ENCODE measurements at regions of chr7 and their contacts with region 1.

Region 1: DNA sequence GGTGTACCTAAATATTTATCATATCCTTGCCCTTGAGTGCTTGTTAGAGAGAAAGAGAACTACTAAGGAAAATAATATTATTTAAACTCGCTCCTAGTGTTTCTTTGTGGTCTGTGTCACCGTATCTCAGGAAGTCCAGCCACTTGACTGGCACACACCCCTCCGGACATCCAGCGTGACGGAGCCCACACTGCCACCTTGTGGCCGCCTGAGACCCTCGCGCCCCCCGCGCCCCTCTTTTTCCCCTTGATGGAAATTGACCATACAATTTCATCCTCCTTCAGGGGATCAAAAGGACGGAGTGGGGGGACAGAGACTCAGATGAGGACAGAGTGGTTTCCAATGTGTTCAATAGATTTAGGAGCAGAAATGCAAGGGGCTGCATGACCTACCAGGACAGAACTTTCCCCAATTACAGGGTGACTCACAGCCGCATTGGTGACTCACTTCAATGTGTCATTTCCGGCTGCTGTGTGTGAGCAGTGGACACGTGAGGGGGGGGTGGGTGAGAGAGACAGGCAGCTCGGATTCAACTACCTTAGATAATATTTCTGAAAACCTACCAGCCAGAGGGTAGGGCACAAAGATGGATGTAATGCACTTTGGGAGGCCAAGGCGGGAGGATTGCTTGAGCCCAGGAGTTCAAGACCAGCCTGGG is 11.4 kb downstream of the SERPINE1 start:
- DNase-seq: peak in 4 of 10 donors; percentile 36 to 55 (median 46)

Region 2: DNA sequence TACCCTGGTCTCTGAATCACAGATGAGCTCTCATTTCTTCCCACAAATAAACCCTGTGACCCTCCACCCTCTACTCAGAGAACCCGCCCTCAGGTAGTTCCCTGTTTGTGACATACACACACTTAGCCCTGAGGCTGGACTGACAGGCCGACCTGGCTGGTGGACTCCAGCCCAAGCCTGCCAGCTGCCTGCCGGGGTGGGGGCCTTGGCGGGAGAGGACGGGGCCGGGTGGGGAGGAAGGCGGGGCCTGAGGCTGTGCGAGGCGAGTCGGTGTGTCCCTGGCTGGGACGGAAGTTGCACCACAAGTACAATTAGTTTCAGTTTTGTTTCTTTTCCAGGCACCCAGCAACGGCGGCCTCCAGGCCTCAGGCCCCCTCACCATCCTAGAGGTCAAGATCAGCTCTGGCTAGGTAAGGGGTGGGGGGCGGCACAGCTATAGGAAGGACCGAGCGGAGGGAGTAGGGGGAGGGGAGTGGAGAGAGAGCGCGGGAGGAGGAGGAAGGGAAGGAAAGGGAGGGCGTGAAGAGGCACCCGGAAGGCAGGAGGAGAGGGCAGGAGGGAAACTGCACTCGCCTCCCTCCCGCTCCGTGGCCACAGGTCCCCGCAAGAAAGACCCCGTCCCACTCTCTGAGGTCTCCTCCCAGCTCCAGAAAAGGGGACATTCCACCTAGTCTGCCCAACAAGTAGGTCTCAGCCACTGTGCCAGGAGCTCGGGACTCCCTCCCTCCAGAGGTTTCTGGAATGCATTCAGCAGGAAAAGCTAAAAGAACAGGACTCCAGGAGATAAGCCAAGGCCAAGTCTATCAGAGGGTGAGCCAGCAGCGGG is 53.0 kb before region 1 on chr7 and contains the start of gene TRIM56:
- intact Hi-C with region 1: loop called (anchors 10 kb)
- DNase-seq: peak; percentile 21 to 95 (median 70)

Region 3: DNA sequence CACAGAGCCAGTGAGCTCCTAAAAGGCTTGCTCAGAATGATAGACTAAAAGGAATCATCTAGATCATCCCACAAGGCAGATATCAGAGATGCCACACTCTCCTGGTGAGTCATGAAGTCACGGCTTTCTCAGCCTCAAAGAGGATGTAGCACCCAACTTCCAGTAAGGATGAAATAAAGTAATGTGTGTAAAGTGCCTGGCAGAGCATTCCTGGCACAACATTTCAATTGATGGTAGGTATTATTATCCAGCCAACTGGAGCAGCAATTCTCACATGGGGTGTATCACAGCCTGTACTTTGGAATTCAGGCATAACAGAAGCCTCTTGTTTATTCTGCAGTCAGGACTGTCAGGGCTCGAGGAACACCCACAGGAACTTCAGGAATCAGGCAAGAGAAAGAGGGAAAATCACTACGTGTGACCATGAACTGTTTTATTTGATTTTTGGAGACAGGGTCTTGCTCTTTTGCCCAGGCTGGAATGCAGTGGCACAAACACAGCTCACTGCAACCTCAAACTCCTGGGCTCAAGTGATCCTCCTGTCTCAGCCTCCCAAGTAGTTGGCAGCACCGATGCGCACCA is 47.0 kb after region 1 on chr7:
- intact Hi-C with region 1: loop called (anchors 5 kb)
- DNase-seq: no peak

Measured in posterior cingulate gyrus (tissue), 11 donors.